Gastrocnemius medialis (tissue), 4 donors: ENCODE measurements at regions of chr1 and their contacts with region 1.

Region 1: DNA sequence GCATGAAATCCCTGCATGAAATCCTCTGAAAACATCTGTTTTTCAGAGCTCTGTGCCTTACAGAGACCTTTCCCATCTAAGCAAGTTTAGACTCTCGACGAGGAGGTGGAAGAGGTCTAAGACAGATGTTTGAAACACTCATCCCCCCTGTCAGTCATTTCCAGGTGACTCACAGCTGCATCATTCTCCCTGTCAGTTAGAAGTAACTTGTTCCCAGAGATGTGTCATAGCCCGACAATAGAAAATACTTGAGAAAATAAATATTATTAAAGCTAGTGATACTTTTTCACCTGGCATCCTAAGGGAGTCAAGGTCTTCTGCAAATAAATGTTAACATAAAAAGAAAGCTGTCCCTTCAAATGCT is 41.6 kb upstream of the SEC16B start:
- DNase-seq: peak; percentile 55 to 67
- ATAC-seq: peak; percentile 100
- H3K4me3 ChIP-seq: no peak overlapping the region
- H3K27ac ChIP-seq: peak overlapping the region; percentile 65 to 84 (median 78)
- H3K4me1 ChIP-seq: peaks cover 13 to 22% of the 10 kb centered on the region in 2 donors
- H3K27me3 ChIP-seq: no peaks in the 10 kb centered on the region
- CTCF ChIP-seq: no peak
- POLR2A ChIP-seq: no peak

Region 2: DNA sequence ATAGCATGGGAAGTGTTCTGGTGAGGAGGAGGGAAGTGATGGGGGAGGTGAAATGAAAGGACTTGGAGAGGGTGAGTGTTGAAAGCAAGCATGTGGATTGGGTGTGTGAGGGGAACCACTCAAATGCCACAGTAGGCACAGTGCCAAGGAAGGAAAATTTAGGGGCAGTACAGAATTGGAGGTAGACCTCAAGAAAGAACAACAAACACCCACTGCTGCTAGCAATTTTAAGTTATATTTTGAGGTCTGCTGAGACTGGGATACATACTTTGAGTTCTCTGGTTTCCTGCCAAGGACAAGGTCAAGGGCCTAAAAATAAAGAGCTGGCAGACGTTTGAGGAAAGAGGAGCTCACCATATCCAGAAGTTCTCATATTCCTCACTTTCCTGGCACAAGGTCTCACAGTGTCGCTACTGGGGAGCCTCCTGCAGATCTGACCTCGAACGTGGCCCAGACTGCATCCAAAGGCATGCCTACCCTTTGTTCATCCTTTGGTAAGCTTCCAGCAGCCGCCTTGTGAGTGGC is 736.7 kb before region 1 on chr1:
- in situ Hi-C with region 1: no loop called
- intact Hi-C with region 1: loop called (anchors 5 kb)
- DNase-seq: peak; percentile 50 to 77
- ATAC-seq: peak; percentile 96 to 98
- H3K4me3 ChIP-seq: no peak overlapping the region
- H3K27ac ChIP-seq: peak overlapping the region; percentile 47 to 79 (median 64)
- H3K4me1 ChIP-seq: peaks cover 27 to 35% of the 10 kb centered on the region in 2 donors
- H3K27me3 ChIP-seq: no peaks in the 10 kb centered on the region
- CTCF ChIP-seq: no peak
- POLR2A ChIP-seq: no peak

Region 3: GRCh38 chr1:177996957-177997356 is 14.5 kb before region 1 on chr1:
- in situ Hi-C with region 1: no loop called
- intact Hi-C with region 1: loop called (anchors 2 kb)
- DNase-seq: no peak
- ATAC-seq: peak in 1 of 2 donors; percentile 16
- H3K4me3 ChIP-seq: no peak overlapping the region
- H3K27ac ChIP-seq: peak overlapping the region; percentile 83 to 90 (median 86)
- H3K4me1 ChIP-seq: peaks cover 47 to 54% of the 10 kb centered on the region in 2 donors
- H3K27me3 ChIP-seq: no peaks in the 10 kb centered on the region
- CTCF ChIP-seq: no peak
- POLR2A ChIP-seq: no peak